HCT116 (cell line): ENCODE measurements at regions of chr18 and their contacts with region 1.

Region 1: DNA sequence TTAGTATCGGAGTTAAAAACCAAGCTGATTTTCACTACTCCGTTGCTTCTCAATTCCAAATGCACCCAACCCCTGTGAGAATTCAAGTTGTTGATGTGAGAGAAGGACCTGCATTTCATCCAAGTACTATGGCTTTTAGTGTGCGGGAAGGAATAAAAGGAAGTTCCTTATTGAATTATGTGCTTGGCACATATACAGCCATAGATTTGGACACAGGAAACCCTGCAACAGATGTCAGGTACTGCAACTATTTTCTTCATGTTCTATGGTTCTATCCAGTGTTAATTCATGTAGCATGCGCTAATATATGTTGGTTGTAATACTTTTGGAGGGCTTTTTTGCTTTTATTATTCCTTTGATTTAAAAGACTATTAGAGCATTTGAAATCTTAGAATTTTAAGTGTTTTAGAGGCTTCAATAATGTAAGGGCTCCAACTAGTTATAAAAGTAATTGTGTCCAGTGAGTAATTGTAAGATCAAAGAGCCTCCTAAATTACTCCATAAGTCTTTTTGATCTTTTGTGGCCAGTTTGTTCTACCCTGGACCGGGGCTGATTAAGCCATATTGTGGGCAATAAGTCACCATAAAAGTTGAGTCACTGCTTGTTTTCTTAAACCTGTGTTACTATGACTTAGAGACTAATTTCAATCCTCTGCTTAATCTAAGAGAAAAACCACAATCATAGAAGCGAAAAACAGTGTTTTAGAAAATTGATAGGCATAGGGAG is 22.9 kb downstream of the DSG4 start:
- DNase-seq: peak; percentile 83
- ATAC-seq: peak; percentile 83
- H3K4me3 ChIP-seq: peak overlapping the region; percentile 4 to 39; a peak in 3 of 4 replicates
- H3K27ac ChIP-seq: peak overlapping the region; percentile 64
- H3K4me1 ChIP-seq: peaks cover 49 to 54% of the 10 kb centered on the region in 2 experiments
- H3K27me3 ChIP-seq: no peaks in the 10 kb centered on the region
- CTCF ChIP-seq: no peak
- POLR2A ChIP-seq: no peak
- RAD21 ChIP-seq: peak; percentile 5; the same call in 1 of the 2 replicates

Region 2: DNA sequence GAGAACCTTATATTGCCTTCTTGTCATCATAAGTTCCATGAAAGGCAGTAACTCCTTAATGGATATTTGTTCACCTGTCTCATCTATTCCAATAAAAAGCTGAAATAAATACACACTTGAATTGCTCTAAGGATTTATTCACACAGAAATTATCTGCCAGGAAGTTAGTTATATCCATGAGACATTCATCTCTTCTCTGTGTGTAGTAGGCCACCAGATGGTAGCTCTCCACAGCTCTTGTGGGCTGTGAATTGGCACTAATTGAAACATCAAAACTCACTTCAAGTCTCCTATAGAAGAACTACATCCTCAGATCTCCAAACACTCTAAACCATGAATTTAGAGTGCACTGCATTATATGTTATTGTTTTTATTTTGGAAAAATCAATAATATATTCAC is 546.5 kb before region 1 on chr18:
- CTCF ChIA-PET with region 1: no interaction called
- POLR2A ChIA-PET with region 1: no interaction called
- RAD21 ChIA-PET with region 1: no interaction called
- intact Hi-C with region 1: no loop called
- DNase-seq: no peak
- ATAC-seq: no peak
- H3K4me3 ChIP-seq: no peak overlapping the region
- H3K27ac ChIP-seq: no peak overlapping the region
- H3K4me1 ChIP-seq: no peaks in the 10 kb centered on the region
- H3K27me3 ChIP-seq: no peaks in the 10 kb centered on the region
- CTCF ChIP-seq: no peak
- POLR2A ChIP-seq: no peak
- RAD21 ChIP-seq: no peak

Region 3: DNA sequence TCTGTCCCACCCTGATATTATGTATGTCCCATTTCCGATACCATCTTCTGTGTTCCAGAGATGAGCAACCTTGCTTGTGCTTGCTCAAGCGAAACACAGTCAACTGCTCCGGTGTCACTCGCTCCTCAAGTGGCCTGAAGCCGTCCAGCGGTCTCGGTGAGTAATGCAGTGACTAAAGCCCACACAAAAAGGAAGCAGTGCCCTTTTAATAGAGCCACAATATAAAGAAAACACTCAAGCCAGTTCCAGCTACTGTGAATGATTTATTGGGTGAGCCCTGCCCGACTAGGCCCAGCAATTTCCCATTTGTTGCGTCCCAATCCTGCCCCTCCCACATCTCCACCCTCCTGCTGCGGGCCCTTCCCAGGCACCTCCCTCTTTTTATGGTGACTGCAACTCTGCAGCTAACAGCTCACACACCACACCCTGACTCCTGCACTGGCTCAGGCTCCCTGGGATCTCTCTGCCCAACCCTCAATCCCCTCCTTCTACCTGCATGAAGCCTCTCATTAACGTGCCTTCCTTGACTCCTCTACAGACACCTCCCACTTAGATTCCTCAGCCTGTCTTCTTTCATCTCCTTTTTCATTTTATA is 192.6 kb before region 1 on chr18:
- CTCF ChIA-PET with region 1: no interaction called
- POLR2A ChIA-PET with region 1: no interaction called
- RAD21 ChIA-PET with region 1: no interaction called
- intact Hi-C with region 1: loop called (anchors 5 kb)
- DNase-seq: peak; percentile 97
- ATAC-seq: peak; percentile 95
- H3K4me3 ChIP-seq: peak overlapping the region; percentile 8 to 20; a peak in 3 of 4 replicates
- H3K27ac ChIP-seq: peak overlapping the region; percentile 32
- H3K4me1 ChIP-seq: peaks cover 17 to 32% of the 10 kb centered on the region in 2 experiments
- H3K27me3 ChIP-seq: no peaks in the 10 kb centered on the region
- CTCF ChIP-seq: peak in 2 of 3 experiments; percentile 25 to 44; a peak in 3 of 6 replicates
- POLR2A ChIP-seq: no peak
- RAD21 ChIP-seq: peak; percentile 63

Region 4: GRCh38 chr18:31274915-31275314 is 124.6 kb before region 1 on chr18:
- CTCF ChIA-PET with region 1: no interaction called
- POLR2A ChIA-PET with region 1: no interaction called
- RAD21 ChIA-PET with region 1: no interaction called
- intact Hi-C with region 1: loop called (anchors 5 kb)
- DNase-seq: peak; percentile 66
- ATAC-seq: peak; percentile 65; the same call in 1 of the 2 replicates
- H3K4me3 ChIP-seq: peak overlapping the region in 1 of 2 experiments; percentile 27; a peak in 2 of 4 replicates
- H3K27ac ChIP-seq: peak overlapping the region; percentile 6; the same call in 1 of the 2 replicates
- H3K4me1 ChIP-seq: peaks cover 22 to 26% of the 10 kb centered on the region in 2 experiments
- H3K27me3 ChIP-seq: no peaks in the 10 kb centered on the region
- CTCF ChIP-seq: no peak
- POLR2A ChIP-seq: no peak
- RAD21 ChIP-seq: no peak